Spleen (tissue), 13 donors: ENCODE measurements at regions of chr13 and their contacts with region 1.

Region 1: GRCh38 chr13:36981156-36981743 is 17.9 kb downstream of the ALG5 start:
- DNase-seq: no peak
- H3K4me3 ChIP-seq: no peak overlapping the region
- H3K27ac ChIP-seq: no peak overlapping the region
- H3K4me1 ChIP-seq: peaks cover 0 to 3% (median 0%) of the 10 kb centered on the region in 6 donors
- H3K27me3 ChIP-seq: no peaks in the 10 kb centered on the region
- CTCF ChIP-seq: peak in 8 of 11 experiments; percentile 11 to 58 (median 45)
- POLR2A ChIP-seq: no peak

Region 2: GRCh38 chr13:36154567-36155291 is 826.5 kb before region 1 on chr13:
- intact Hi-C with region 1: no loop called
- DNase-seq: no peak
- H3K4me3 ChIP-seq: peak overlapping the region in 5 of 8 donors; percentile 2 to 57 (median 13)
- H3K27ac ChIP-seq: no peak overlapping the region
- H3K4me1 ChIP-seq: peaks cover 0 to 7% (median 0%) of the 10 kb centered on the region in 6 donors
- H3K27me3 ChIP-seq: peaks cover 0 to 16% (median 0%) of the 10 kb centered on the region in 7 donors
- CTCF ChIP-seq: no peak
- POLR2A ChIP-seq: no peak

Region 3: DNA sequence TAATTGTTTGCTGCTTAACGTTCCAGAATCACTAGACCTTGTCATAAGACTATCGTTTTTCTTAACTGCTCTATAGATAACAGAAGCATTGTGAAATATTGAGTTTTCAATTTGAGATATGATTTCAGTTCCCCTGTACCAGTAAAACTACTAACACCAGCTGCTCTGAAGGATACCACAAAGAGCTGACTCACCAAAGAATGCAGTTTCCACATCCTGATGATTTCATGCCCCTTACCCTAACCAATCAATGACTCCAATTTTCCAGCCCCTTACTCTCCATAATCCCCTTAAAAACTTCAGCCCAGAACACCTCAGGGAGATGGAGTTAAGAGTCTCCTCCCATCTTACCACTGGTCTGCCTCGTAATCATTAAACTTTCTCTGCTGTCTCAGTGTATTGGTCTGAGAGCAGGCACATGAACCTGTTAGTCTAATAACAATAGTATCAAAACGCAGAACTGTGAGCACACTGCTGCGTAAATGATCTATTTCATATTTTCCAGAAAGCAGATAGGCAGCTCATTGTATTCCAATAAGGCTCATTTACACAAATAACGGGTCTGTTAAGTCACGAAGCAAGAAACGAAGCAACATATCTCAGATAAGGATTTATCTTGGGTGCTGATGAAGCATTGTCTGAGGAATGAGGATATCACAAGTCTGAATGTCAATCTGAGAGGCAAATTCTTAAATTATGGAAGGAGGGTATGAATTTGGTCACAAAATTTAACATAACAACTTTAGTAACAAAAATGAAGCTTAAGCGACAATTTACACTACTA is 563.0 kb before region 1 on chr13:
- intact Hi-C with region 1: loop called (anchors 10 kb)
- DNase-seq: no peak
- H3K4me3 ChIP-seq: no peak overlapping the region
- H3K27ac ChIP-seq: peak overlapping the region in 3 of 8 donors; percentile 13 to 24 (median 15)
- H3K4me1 ChIP-seq: peaks cover 3 to 31% (median 12%) of the 10 kb centered on the region in 6 donors
- H3K27me3 ChIP-seq: peaks cover 0 to 35% (median 4%) of the 10 kb centered on the region in 7 donors
- CTCF ChIP-seq: no peak
- POLR2A ChIP-seq: no peak

Region 4: DNA sequence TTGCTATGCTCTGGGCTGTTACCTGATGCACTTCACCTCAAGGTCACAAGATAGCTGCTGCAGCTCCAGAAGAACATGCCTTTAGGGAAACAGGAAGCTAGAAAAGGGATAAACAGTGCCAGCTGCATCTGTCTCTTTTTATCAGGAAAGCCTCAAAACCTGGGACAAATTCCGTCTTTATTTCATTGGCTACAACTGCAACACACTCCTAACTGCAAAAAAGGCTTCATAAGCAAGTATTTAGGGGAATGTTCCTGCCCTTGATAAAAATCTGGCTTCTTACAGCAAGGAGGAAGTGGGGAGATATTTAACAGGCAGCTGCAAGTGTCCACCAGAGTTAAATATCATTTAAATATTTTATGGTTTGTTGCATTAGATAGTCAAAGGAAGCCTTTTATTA is 341.6 kb before region 1 on chr13:
- intact Hi-C with region 1: no loop called
- DNase-seq: no peak
- H3K4me3 ChIP-seq: no peak overlapping the region
- H3K27ac ChIP-seq: no peak overlapping the region
- H3K4me1 ChIP-seq: no peaks in the 10 kb centered on the region
- H3K27me3 ChIP-seq: no peaks in the 10 kb centered on the region
- CTCF ChIP-seq: no peak
- POLR2A ChIP-seq: no peak